Adrenal gland (tissue), 19 donors: ENCODE measurements at regions of chr1 and their contacts with region 1.

Region 1: DNA sequence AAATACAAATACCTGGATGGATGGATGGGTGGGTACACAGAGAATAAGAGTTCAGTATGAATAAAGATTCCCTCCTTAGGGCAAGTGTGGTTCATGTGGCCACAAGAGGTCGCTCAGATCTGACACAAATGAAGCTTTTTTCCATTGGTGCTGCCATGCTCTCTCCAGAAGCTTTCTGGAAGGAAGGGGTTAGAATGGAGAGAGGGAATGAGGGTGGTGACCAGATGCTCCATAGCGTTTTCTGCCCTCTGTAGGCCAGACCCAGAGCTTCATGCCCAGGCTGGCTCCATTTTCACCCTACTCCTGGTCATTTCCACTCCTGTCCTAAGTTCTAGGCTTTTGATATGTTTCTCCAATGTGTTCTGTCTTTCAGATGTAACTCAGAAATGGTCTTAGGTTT is 3.3 kb upstream of the FCRL6 start:
- DNase-seq: peak; percentile 70 to 89 (median 77)
- H3K4me3 ChIP-seq: no peak overlapping the region
- H3K27ac ChIP-seq: no peak overlapping the region
- H3K4me1 ChIP-seq: peaks cover under 1 to 3% of the 10 kb centered on the region in 2 donors
- H3K27me3 ChIP-seq: no peaks in the 10 kb centered on the region
- CTCF ChIP-seq: peak; percentile 77 to 98 (median 90)
- POLR2A ChIP-seq: no peak

Region 2: GRCh38 chr1:159218649-159219636 is 580.0 kb before region 1 on chr1:
- intact Hi-C with region 1: loop called in 1 of 2 experiments (anchors 5 kb)
- DNase-seq: no peak
- H3K4me3 ChIP-seq: no peak overlapping the region
- H3K27ac ChIP-seq: no peak overlapping the region
- H3K4me1 ChIP-seq: no peaks in the 10 kb centered on the region
- H3K27me3 ChIP-seq: no peaks in the 10 kb centered on the region
- CTCF ChIP-seq: no peak
- POLR2A ChIP-seq: no peak

Region 3: DNA sequence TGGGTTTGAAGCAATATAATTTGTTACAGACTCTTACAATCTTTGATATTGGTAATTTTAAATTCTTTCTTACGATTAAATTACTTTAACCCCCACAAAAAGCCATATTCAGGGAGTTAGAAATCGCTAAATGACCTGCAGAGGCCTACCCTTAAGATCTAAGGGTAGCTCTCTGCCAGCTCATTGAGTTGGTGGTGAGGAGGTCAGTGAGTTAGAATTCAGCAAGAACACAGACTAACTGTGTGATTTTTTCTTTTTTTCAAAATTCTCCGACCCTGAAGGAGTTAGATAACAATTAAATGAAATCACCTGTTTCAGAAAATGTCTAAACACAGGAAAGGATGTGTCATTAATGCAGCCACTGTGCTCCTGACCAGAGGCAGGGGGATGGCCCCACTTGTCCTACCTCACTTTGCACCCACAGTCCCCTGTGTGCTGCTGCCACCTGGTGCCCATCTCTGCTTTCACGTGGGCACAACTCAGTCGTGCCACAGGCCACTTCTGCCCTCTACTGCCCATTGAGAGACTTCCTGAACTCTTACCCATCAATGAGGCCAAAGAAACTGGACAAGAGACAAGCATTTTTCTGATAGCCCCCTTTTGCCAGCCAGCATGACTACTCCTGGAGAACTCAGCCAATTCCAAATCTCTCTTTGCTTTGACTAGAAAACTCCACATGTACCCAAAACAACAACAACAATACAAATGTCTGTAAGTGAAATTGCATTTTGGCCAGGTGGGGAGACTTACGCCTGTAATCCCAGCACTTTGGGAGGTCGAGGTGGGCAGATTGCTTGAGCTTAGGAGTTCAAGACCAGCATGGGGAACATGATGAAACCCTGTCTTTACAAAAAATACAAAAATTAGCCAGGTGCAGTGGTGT is 92.6 kb after region 1 on chr1:
- intact Hi-C with region 1: loop called (anchors 2 kb)
- DNase-seq: peak; percentile 86 to 94 (median 91)
- H3K4me3 ChIP-seq: no peak overlapping the region
- H3K27ac ChIP-seq: no peak overlapping the region
- H3K4me1 ChIP-seq: peaks cover 8 to 23% of the 10 kb centered on the region in 2 donors
- H3K27me3 ChIP-seq: no peaks in the 10 kb centered on the region
- CTCF ChIP-seq: peak; percentile 83 to 100 (median 100)
- POLR2A ChIP-seq: no peak

Region 4: DNA sequence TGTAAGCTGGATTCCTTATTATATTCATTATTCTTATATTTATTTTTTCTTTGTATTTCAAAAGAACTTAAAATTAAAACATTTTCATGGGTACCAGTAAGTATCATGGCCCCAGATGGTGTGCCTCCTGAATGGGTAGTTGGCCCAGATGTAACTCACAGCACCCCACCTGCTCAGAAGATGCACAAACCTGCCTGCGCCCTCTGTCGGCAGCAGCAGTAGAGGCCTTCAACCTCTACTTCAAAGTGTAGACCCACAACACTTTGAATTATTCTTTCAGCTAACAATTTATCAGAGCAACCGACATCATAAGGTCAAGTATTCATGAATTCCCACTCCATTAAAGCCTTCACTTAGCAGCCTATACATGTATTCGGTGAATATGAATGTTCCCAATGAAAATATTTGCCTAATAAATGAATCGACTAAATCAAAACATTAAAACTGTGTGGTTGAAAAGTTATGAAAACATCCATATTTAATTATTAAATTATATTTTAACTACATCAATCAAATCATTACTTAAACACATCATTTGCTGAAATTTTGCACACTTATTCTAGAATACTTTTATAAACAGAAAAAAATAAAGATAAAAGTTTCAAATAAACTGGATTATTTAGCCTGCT is 207.5 kb after region 1 on chr1:
- intact Hi-C with region 1: loop called in 1 of 2 experiments (anchors 10 kb)
- DNase-seq: peak; percentile 50 to 79 (median 69)
- H3K4me3 ChIP-seq: no peak overlapping the region
- H3K27ac ChIP-seq: no peak overlapping the region
- H3K4me1 ChIP-seq: no peaks in the 10 kb centered on the region
- H3K27me3 ChIP-seq: no peaks in the 10 kb centered on the region
- CTCF ChIP-seq: peak; percentile 50 to 82 (median 60)
- POLR2A ChIP-seq: no peak